ENCODE measurements at regions of chr3 and their contacts with region 1.

Region 1: GRCh38 chr3:42376344-42376798 is 34.0 kb downstream of the LYZL4 start:
- DNase-seq: peak; percentile 95
- ATAC-seq: peak; percentile 97
- H3K4me3 ChIP-seq: no peak overlapping the region
- H3K27ac ChIP-seq: peak overlapping the region; percentile 43
- H3K4me1 ChIP-seq: peaks cover 12% of the 10 kb centered on the region
- H3K27me3 ChIP-seq: no peaks in the 10 kb centered on the region
- CTCF ChIP-seq: no peak

Region 2: DNA sequence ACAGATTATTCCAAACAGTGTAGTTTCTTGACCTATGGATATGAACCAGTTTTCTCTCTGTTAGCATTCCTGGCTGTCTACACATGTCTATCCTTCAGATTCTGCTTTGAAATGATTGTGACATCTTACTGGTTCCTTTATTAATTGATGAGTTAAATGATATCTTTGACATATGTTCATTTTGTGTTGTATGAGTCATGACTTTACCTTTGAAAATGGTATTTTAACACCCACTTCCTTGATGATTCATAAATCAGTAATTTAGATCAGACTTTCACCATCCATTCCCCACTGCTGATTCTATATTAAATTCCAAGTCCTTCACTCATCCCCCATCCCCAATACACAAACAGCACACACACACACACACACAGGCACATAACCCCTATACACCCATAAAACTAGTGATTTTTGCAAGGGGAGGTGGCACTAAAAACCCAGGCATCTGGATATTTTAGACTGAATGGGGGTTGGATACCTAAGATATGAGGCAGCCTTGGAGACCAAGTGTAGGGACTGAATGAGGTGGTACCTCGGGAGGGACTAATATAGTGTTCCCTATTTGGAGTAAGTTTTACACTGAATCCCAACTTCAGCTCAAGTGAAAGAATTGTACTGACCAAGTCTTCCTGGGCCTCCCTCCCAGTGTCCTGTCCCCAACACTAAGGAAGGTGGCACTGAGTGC is 120.1 kb before region 1 on chr3:
- CTCF ChIA-PET with region 1: no interaction called
- POLR2A ChIA-PET with region 1: no interaction called
- intact Hi-C with region 1: loop called (anchors 5 kb)
- DNase-seq: peak; percentile 94
- ATAC-seq: peak; percentile 80
- H3K4me3 ChIP-seq: no peak overlapping the region
- H3K27ac ChIP-seq: peak overlapping the region; percentile 14; the same call in 1 of the 2 replicates
- H3K4me1 ChIP-seq: peaks cover 36% of the 10 kb centered on the region
- H3K27me3 ChIP-seq: no peaks in the 10 kb centered on the region
- CTCF ChIP-seq: no peak

Measured in PC-3 (cell line).